A549 (cell line): ENCODE measurements at regions of chr11 and their contacts with region 1.

Region 1: GRCh38 chr11:62726915-62727763 is at the start of gene HNRNPUL2:
- DNase-seq: peak; percentile 97 to 100
- ATAC-seq: peak; percentile 88 to 91
- H3K4me3 ChIP-seq: peak within 1 kb of the TSS; percentile 78
- H3K27ac ChIP-seq: peak within 1 kb of the TSS; percentile 97
- H3K4me1 ChIP-seq: peaks cover 21% of the 10 kb centered on the region
- CTCF ChIP-seq: no peak
- EP300 ChIP-seq: no peak
- POLR2A ChIP-seq: peak; percentile 77
- RAD21 ChIP-seq: no peak
- polyA plus RNA-seq, gene HNRNPUL2: 31.4 and 31.6 TPM in 2 replicates

Region 2: GRCh38 chr11:62542750-62543567 is 184.2 kb before region 1 on chr11:
- CTCF ChIA-PET with region 1: no interaction called
- POLR2A ChIA-PET with region 1: no interaction called
- DNase-seq: peak; percentile 72 to 82
- ATAC-seq: peak; percentile 11 to 46; a peak in 5 of 6 replicates
- H3K4me3 ChIP-seq: peak overlapping the region; percentile 96
- H3K27ac ChIP-seq: peak overlapping the region; percentile 97 to 98
- H3K4me1 ChIP-seq: peaks cover 75% of the 10 kb centered on the region
- CTCF ChIP-seq: peak; percentile 87
- EP300 ChIP-seq: no peak
- POLR2A ChIP-seq: no peak
- RAD21 ChIP-seq: peak; percentile 92 to 95

Region 3: DNA sequence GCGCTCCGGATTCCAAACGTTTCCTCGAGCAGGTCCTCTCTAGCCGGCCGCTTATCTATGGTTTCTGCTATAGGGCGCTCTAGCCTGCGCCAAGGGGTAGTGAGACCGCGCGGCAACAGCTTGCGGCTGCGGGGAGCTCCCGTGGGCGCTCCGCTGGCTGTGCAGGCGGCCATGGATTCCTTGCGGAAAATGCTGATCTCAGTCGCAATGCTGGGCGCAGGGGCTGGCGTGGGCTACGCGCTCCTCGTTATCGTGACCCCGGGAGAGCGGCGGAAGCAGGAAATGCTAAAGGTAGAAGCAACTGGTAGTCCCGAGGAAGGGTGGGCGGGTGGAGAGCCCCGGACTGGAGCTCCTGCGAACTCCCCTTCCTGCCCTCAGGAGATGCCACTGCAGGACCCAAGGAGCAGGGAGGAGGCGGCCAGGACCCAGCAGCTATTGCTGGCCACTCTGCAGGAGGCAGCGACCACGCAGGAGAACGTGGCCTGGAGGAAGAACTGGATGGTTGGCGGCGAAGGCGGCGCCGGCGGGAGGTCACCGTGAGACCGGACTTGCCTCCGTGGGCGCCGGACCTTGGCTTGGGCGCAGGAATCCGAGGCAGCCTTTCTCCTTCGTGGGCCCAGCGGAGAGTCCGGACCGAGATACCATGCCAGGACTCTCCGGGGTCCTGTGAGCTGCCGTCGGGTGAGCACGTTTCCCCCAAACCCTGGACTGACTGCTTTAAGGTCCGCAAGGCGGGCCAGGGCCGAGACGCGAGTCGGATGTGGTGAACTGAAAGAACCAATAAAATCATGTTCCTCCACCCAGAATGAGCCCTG is 55.4 kb before region 1 on chr11 and contains the starts of genes LBHD1 and UQCC3:
- CTCF ChIA-PET with region 1: interaction called, 3 read pairs
- POLR2A ChIA-PET with region 1: interaction called, 43 read pairs
- DNase-seq: peak; percentile 86 to 92
- ATAC-seq: peak; percentile 81 to 86
- H3K4me3 ChIP-seq: peak within 1 kb of the TSS; percentile 90
- H3K27ac ChIP-seq: peak within 1 kb of the TSS; percentile 97 to 98
- H3K4me1 ChIP-seq: peaks cover 31% of the 10 kb centered on the region
- CTCF ChIP-seq: no peak
- EP300 ChIP-seq: no peak
- POLR2A ChIP-seq: peak; percentile 72
- RAD21 ChIP-seq: no peak
- polyA plus RNA-seq, gene LBHD1: 4.1 and 5.3 TPM in 2 replicates
- polyA plus RNA-seq, gene UQCC3: 13.9 and 20.2 TPM in 2 replicates

Region 4: DNA sequence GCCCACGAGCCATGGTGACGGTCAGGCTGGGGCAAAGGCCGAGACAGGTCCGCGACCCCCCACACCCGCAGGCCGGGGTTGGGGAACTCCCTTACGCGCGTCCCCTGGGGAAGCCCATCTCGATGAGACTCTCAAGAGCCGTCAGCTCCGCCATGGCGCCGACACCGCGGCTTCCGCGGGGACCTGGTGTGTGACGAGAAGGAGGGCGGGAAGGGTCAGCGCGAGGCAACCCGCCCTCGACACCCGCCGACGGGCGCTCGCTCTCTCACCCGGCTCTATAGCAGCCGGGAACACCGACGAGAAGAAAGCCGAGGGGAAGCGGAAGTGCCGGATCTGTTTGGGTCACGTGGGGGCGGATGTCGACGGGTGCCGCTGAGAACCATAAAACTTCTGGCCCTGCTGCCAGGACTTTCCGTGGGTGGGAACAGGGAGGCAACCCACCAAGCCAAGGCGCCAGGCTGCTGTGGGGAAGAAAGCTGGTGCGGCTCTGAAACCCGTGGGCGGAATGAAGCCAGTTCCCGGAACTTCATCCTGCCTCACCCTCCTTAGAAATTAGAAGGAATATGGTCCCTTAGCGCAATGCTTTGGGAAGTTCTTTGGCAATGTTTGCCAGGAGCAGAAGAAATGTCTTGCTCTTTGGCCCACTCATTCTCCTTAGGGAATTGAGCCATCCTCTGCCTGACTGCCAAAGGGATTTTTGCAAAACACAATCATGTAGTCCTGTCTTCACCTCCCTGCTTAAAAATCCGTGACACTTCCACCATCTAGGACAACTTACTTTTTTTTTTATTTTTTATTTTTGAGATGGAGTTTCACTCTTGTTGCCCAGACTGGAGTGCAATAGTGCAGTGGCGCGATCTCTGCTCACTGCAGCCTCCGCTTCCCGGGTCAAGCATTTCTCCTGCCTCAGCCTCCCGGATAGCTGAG is 48.1 kb before region 1 on chr11 and contains the start of gene UBXN1:
- CTCF ChIA-PET with region 1: interaction called, 10 read pairs
- POLR2A ChIA-PET with region 1: interaction called, 21 read pairs
- DNase-seq: peak; percentile 87 to 92
- ATAC-seq: peak; percentile 84 to 86
- H3K4me3 ChIP-seq: peak within 1 kb of the TSS; percentile 67
- H3K27ac ChIP-seq: peak within 1 kb of the TSS; percentile 87 to 92
- H3K4me1 ChIP-seq: peaks cover 24% of the 10 kb centered on the region
- CTCF ChIP-seq: no peak
- EP300 ChIP-seq: no peak
- POLR2A ChIP-seq: peak; percentile 57
- RAD21 ChIP-seq: no peak
- polyA plus RNA-seq, gene UBXN1: 56.8 and 120 TPM in 2 replicates

Region 5: GRCh38 chr11:62705880-62706849 is 21.0 kb before region 1 on chr11:
- CTCF ChIA-PET with region 1: interaction called, 9 read pairs
- POLR2A ChIA-PET with region 1: interaction called, 64 read pairs
- DNase-seq: peak; percentile 87 to 90
- ATAC-seq: peak; percentile 73 to 87
- H3K4me3 ChIP-seq: peak overlapping the region; percentile 69
- H3K27ac ChIP-seq: peak overlapping the region; percentile 80 to 92
- H3K4me1 ChIP-seq: peaks cover 26% of the 10 kb centered on the region
- CTCF ChIP-seq: no peak
- EP300 ChIP-seq: no peak
- POLR2A ChIP-seq: peak; percentile 66
- RAD21 ChIP-seq: no peak

Region 6: DNA sequence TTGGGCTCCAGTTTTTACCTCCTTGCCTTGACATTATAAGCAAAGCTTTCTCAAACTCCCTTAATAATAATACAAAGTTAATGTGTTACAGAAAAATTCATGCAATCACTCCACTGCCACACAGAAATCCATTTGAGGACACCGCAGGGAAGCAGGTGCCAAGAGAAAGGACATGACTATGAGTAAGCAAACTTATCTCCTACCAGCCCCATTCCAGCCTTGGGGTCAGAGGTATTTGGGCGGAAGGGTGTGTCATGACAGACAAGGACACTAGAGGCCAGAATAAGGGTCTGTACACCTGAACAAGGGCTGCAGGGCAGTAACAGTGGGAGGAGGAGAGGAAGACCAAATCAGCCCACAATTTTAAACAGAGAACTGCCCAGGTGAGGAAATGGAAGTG is 13.8 kb before region 1 on chr11:
- CTCF ChIA-PET with region 1: interaction called, 9 read pairs
- POLR2A ChIA-PET with region 1: interaction called, 64 read pairs
- DNase-seq: peak; percentile 52 to 58
- ATAC-seq: peak in 1 of 2 experiments; percentile 15; a peak in 1 of 6 replicates
- H3K4me3 ChIP-seq: no peak overlapping the region
- H3K27ac ChIP-seq: peak overlapping the region; percentile 56 to 80
- H3K4me1 ChIP-seq: peaks cover 48% of the 10 kb centered on the region
- CTCF ChIP-seq: no peak
- EP300 ChIP-seq: no peak
- POLR2A ChIP-seq: no peak
- RAD21 ChIP-seq: no peak

Region 7: DNA sequence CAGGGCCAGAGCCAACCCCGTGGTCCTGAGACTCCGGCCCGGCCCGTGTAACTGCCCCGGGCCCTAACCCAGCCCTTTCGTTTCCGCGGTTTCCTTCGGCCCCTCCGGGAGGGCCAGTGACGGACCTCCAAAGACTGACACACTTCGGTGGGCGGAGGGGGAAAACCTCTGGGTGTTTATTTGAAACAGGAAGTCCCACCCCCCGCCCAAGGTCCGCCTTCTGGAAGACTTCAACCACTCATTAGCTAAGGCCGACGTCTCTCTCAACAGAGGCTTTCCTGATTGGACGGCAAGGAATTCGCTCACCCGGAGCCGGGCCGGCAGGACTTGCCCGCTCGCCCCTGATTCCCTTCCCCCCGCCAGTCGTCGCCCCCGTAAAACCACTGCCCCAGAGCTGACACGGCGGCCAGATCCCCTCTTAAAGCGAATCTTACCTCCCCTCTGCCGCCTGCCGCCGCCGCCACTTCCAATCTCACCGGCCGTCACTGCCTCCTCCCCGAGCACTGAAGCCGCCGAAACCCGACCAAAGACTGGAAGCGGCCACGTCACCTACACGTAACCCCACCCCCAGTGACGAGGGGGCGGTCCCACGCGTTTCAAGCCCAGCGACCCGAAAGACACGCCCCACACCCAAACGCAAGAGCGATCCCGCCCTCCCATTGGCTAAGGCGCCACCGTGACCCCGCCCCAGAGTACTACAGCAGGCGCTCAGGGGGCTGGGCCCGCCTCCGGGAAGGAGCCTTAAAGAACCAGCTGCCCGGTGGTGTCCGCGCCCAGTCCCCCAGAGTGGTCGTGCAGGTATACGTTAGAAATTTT is 104.6 kb after region 1 on chr11 and contains the start of gene STX5:
- CTCF ChIA-PET with region 1: no interaction called
- POLR2A ChIA-PET with region 1: interaction called, 12 read pairs
- DNase-seq: peak; percentile 98 to 99
- ATAC-seq: peak; percentile 89 to 94
- H3K4me3 ChIP-seq: peak within 1 kb of the TSS; percentile 85
- H3K27ac ChIP-seq: peak within 1 kb of the TSS; percentile 91 to 94
- H3K4me1 ChIP-seq: peaks cover 18% of the 10 kb centered on the region
- CTCF ChIP-seq: no peak
- EP300 ChIP-seq: no peak
- POLR2A ChIP-seq: peak; percentile 37
- RAD21 ChIP-seq: no peak
- polyA plus RNA-seq, gene STX5: 30.3 and 32.3 TPM in 2 replicates

Region 8: DNA sequence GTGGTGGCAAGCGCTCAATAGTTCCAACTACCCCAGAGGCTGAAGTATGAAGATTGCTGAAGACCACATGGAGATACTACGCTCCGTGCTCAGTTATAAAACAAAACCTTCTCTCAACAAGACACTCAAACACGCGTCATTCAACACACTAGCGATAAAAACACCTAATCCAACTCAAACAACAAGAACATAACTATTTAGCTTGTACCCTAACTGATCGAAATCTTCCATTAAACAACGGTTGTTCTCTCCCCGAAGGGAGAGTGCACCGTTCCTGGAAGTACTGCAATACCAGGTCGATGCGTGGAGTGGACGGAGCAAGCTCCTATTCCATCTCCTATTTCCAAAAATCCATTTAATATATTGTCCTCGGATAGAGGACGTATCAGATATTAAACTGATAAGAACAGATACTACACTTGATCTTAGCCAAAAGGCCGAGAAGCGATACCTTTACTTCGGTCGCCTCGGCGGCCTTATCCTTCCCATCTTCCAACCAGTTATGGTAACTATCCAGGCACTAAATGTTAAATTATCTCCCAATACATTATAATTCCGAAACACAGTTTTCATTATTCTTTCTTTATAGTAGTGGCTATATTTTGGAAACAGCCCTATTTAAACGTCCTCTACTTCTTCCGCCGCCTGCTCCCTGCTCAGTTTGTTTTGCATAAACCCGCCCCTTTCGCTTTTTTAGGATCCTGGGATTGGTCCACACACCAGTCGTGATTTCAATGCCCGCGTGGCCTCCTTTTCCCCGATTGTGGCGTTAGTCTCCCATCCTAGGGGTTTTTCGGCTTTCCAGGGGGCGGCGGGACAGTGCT is 114.4 kb after region 1 on chr11:
- CTCF ChIA-PET with region 1: no interaction called
- POLR2A ChIA-PET with region 1: interaction called, 38 read pairs
- DNase-seq: peak; percentile 97 to 99
- ATAC-seq: peak; percentile 87 to 91
- H3K4me3 ChIP-seq: peak overlapping the region; percentile 89
- H3K27ac ChIP-seq: peak overlapping the region; percentile 94 to 99
- H3K4me1 ChIP-seq: peaks cover 16% of the 10 kb centered on the region
- CTCF ChIP-seq: no peak
- EP300 ChIP-seq: peak in 1 of 2 experiments; percentile 49; a peak in 1 of 5 replicates
- POLR2A ChIP-seq: peak; percentile 95
- RAD21 ChIP-seq: no peak